GM10248 (cell line): ENCODE measurements at regions of chr17 and their contacts with region 1.

Region 1: GRCh38 chr17:38415250-38416194 is 12.7 kb upstream of the ARHGAP23 start:
- DNase-seq: peak; percentile 63
- CTCF ChIP-seq: no peak

Region 2: DNA sequence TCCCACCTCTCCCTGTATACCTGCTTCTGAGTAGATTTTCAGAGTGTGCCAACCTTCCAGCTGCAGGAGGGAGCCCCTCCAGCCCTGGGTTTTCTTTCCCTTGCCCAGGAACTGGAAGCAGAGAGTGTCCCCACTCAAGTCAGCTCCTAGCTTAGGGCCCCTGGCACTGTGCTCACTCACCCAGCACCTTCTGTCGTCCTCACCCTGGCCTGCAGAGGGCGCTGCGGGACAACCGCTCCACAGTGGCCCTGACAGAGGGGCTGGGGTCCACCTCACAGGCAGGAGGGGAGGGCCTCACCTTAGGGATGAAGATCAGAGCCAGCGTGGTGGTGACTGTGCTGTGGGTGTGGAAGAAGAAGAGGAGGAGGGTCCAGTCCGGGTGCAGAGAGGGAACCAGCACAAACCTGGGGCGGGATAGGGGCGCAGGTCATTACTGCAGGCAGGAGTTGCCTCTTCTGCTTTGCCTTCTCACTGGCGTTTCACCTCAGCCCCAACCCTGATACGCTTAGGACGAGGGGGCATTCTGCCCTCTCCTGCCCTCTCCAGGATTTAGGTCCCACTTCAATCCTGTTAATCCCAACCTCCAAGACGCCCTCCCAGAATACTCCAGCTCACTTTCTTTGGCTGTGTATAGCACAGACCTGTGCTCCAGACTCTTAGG is 81.8 kb before region 1 on chr17:
- CTCF ChIA-PET with region 1: interaction called, 13 read pairs
- POLR2A ChIA-PET with region 1: no interaction called
- DNase-seq: peak; percentile 68
- CTCF ChIP-seq: peak; percentile 71

Region 3: DNA sequence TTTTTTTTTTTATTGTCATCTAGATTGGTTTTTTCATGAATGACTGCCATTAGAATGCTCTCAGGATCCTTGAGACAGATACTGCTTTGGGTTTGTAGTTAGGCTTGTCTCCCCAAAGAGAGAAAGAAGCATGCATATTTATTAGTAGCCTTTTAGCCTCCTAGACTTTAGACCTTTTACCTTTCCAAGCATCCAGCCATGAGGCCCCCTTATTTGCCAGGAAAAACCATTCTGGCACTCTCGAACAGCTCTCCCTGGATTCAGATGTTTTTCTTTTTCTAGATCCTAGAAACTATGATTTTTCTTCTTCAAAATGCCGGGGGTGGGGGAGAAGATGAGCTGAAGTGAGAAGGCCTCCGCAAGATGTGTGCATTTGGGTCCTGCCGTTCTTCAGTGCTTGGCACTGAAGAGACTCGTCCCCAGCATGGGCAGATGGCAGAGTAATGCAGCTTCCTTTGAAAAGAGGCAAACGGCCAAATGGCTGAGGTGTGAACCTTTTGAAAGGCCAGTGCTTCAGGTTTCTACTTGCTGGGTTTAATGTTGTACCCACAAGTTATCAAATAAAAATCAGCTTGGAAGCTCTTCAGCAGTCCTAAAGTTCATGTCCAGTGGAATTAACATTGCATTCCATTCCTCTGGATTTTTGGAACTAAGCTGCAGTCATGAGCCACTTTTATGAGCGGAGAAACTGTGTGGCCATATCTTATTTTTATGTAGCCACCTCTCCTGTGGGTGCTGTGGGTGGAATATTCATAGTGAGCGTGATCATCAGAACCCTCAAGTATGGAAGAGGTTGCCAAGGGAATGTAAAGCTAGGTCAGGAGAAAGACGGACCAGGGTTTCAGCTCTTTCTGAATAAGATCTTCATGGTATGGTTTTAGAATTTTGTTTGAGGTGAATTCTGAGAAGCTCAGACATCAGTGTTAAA is 56.7 kb before region 1 on chr17:
- CTCF ChIA-PET with region 1: interaction called, 282 read pairs
- POLR2A ChIA-PET with region 1: no interaction called
- DNase-seq: no peak
- CTCF ChIP-seq: no peak

Region 4: GRCh38 chr17:38395090-38395489 is 20.4 kb before region 1 on chr17:
- CTCF ChIA-PET with region 1: interaction called, 11 read pairs
- POLR2A ChIA-PET with region 1: no interaction called
- DNase-seq: no peak
- CTCF ChIP-seq: no peak

Region 5: GRCh38 chr17:39270923-39271322 is 855.4 kb after region 1 on chr17:
- CTCF ChIA-PET with region 1: no interaction called
- POLR2A ChIA-PET with region 1: no interaction called
- DNase-seq: peak; percentile 27
- CTCF ChIP-seq: peak; percentile 34